Gastrocnemius medialis (tissue), 4 donors: ENCODE measurements at regions of chr5 and their contacts with region 1.

Region 1: DNA sequence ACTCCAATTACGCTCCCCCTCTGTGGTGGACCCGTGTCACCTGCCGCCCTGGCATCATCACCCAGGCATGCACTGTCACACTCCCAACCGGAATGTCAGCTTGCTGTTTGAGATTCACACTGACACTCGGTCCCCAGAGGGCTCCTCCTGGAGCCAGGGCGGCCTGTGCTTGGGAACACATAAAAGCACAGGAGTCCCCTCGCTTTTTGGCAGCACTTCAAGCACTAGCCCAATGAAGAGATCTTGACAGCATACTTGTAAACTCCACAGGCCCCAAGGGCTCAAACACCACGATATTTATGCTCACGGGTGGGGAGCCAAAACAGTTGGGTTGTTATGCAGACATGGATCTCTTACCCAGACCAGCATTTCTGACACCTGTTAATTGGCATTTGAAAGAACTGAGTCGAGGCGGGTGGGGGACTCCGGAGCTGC is 90.8 kb upstream of the EGFLAM start:
- DNase-seq: peak; percentile 90 to 91
- ATAC-seq: peak; percentile 50 to 63
- H3K4me3 ChIP-seq: peak overlapping the region; percentile 28 to 39 (median 37)
- H3K27ac ChIP-seq: peak overlapping the region; percentile 84 to 89 (median 87)
- H3K4me1 ChIP-seq: peaks cover 45 to 46% of the 10 kb centered on the region in 2 donors
- H3K27me3 ChIP-seq: no peaks in the 10 kb centered on the region
- CTCF ChIP-seq: no peak
- POLR2A ChIP-seq: peak; percentile 9 to 64

Region 2: DNA sequence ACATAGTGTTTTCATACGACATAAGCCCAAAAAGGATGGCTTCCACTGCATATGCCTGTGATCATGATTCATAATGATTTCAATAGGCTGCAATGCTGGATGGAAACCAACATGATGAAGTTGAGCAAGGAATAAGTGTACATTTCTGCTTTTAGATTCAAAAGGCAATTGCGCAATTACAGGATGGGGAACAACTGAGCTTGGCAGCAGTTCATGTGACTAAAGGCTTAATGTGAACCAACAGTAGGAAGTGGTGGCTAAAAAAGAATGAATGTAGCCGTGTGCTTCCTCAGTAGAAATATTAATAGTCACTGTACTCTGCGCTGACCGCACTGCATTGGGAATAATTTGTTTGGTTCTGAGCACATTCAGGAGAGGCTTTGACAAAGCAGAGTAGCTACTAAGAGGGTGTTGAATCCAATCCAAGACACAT is 1510.0 kb before region 1 on chr5:
- in situ Hi-C with region 1: no loop called
- intact Hi-C with region 1: loop called (anchors 10 kb)
- DNase-seq: peak; percentile 84 to 85
- ATAC-seq: peak; percentile 85 to 88
- H3K4me3 ChIP-seq: peak overlapping the region in 2 of 4 donors; percentile 6 to 23
- H3K27ac ChIP-seq: peak overlapping the region; percentile 85 to 89 (median 87)
- H3K4me1 ChIP-seq: peaks cover 56 to 57% of the 10 kb centered on the region in 2 donors
- H3K27me3 ChIP-seq: no peaks in the 10 kb centered on the region
- CTCF ChIP-seq: no peak
- POLR2A ChIP-seq: peak in 1 of 2 donors; percentile 55

Region 3: DNA sequence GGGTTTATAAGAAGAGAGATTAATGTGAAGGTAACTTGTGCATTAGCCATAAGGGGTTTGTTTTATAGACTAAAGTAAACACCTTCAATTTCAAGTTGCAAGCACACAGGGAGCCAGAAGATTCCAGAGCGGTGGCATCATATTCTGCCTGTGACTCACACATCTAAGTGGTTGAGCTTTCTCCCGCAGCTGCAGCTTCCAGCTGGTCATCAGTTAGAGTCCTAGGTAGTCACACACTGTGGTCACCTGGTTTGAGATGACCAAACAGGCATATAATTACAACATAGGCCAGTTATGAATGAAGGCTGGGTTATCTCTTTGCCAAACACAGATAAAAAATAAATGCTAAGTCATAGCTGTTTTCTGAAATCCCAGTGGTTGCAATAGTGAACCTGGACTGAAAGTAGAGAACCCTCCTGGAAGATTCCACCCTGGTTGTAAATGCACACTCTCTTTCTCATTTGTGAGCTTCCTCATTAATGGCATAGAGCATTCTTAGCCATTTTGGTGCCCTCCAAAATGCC is 499.0 kb before region 1 on chr5:
- in situ Hi-C with region 1: no loop called
- intact Hi-C with region 1: loop called (anchors 5 kb)
- DNase-seq: peak; percentile 93 to 94
- ATAC-seq: peak; percentile 95
- H3K4me3 ChIP-seq: no peak overlapping the region
- H3K27ac ChIP-seq: peak overlapping the region; percentile 78 to 89 (median 84)
- H3K4me1 ChIP-seq: peaks cover 52 to 60% of the 10 kb centered on the region in 2 donors
- H3K27me3 ChIP-seq: no peaks in the 10 kb centered on the region
- CTCF ChIP-seq: no peak
- POLR2A ChIP-seq: no peak

Region 4: GRCh38 chr5:37837414-37838032 is 330.1 kb before region 1 on chr5:
- in situ Hi-C with region 1: no loop called
- intact Hi-C with region 1: loop called (anchors 1 kb)
- DNase-seq: peak; percentile 49 to 68
- ATAC-seq: peak; percentile 36 to 57
- H3K4me3 ChIP-seq: peak overlapping the region; percentile 64 to 73 (median 70)
- H3K27ac ChIP-seq: peak overlapping the region; percentile 66 to 95 (median 86)
- H3K4me1 ChIP-seq: peaks cover 22 to 49% of the 10 kb centered on the region in 2 donors
- H3K27me3 ChIP-seq: peaks cover 0 to 70% (median 7%) of the 10 kb centered on the region in 3 donors
- CTCF ChIP-seq: peak; percentile 79 to 92 (median 88)
- POLR2A ChIP-seq: no peak

Region 5: GRCh38 chr5:38032149-38032548 is 135.4 kb before region 1 on chr5:
- in situ Hi-C with region 1: no loop called
- intact Hi-C with region 1: no loop called
- DNase-seq: no peak
- ATAC-seq: no peak
- H3K4me3 ChIP-seq: no peak overlapping the region
- H3K27ac ChIP-seq: no peak overlapping the region
- H3K4me1 ChIP-seq: no peaks in the 10 kb centered on the region
- H3K27me3 ChIP-seq: no peaks in the 10 kb centered on the region
- CTCF ChIP-seq: no peak
- POLR2A ChIP-seq: no peak

Region 6: GRCh38 chr5:38193015-38193581 is 25.5 kb after region 1 on chr5:
- in situ Hi-C with region 1: no loop called
- intact Hi-C with region 1: loop called (anchors 2 kb)
- DNase-seq: peak; percentile 44 to 63
- ATAC-seq: peak; percentile 78 to 85
- H3K4me3 ChIP-seq: no peak overlapping the region
- H3K27ac ChIP-seq: no peak overlapping the region
- H3K4me1 ChIP-seq: peaks cover 6% of the 10 kb centered on the region in 2 donors
- H3K27me3 ChIP-seq: peaks cover 0 to 11% (median 0%) of the 10 kb centered on the region in 3 donors
- CTCF ChIP-seq: peak; percentile 79 to 88 (median 84)
- POLR2A ChIP-seq: no peak

Region 7: GRCh38 chr5:38237681-38238080 is 70.1 kb after region 1 on chr5:
- in situ Hi-C with region 1: no loop called
- intact Hi-C with region 1: no loop called
- DNase-seq: no peak
- ATAC-seq: peak in 1 of 2 donors; percentile 27
- H3K4me3 ChIP-seq: no peak overlapping the region
- H3K27ac ChIP-seq: no peak overlapping the region
- H3K4me1 ChIP-seq: no peaks in the 10 kb centered on the region
- H3K27me3 ChIP-seq: no peaks in the 10 kb centered on the region
- CTCF ChIP-seq: no peak
- POLR2A ChIP-seq: no peak

Region 8: DNA sequence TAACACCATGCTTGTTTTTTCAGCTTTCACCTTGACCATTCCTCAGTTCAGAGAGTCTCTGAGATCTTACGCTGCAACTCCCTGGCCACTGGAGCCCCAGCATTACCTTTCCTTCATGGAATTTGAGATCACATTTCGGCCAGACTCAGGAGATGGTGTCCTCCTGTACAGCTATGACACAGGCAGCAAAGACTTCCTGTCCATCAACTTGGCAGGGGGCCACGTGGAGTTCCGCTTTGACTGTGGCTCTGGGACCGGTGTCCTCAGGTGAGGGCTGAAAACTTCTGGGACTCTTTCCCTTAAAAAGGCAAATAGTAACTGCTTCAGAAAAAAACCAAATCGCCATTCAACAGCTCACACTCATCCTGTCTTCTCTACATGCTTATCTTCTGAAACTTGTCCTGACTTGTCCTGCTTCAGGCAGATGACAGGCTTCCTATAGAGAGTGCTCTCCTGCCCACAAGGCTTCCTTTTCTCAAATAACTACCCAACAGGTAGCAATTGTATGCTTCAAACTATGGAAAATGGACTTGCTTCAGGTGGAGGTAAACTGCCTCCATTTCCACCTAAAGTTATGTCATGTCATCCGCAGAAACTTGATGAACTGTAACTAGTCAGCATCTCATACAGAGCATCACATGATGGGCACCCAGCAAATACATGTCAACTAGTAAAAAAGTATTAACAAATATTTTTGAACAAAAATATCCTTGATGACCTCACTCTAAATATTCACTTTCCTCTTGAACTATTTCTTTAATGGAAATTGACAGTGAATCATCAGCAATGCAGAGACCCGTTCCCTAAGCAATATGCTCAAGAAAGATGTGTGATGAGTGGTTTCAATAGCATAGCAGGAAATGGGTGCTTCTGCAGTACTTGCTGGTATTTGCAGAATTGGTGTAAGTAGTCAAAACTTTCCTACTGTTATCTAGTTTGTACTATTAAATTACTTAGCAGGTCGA is 259.7 kb after region 1 on chr5:
- in situ Hi-C with region 1: no loop called
- intact Hi-C with region 1: no loop called
- DNase-seq: no peak
- ATAC-seq: no peak
- H3K4me3 ChIP-seq: no peak overlapping the region
- H3K27ac ChIP-seq: no peak overlapping the region
- H3K4me1 ChIP-seq: no peaks in the 10 kb centered on the region
- H3K27me3 ChIP-seq: no peaks in the 10 kb centered on the region
- CTCF ChIP-seq: no peak
- POLR2A ChIP-seq: no peak

Region 9: GRCh38 chr5:38528162-38528703 is 360.7 kb after region 1 on chr5:
- in situ Hi-C with region 1: no loop called
- intact Hi-C with region 1: no loop called
- DNase-seq: no peak
- ATAC-seq: no peak
- H3K4me3 ChIP-seq: no peak overlapping the region
- H3K27ac ChIP-seq: no peak overlapping the region
- H3K4me1 ChIP-seq: peaks cover 21 to 37% of the 10 kb centered on the region in 2 donors
- H3K27me3 ChIP-seq: no peaks in the 10 kb centered on the region
- CTCF ChIP-seq: no peak
- POLR2A ChIP-seq: no peak

Region 10: DNA sequence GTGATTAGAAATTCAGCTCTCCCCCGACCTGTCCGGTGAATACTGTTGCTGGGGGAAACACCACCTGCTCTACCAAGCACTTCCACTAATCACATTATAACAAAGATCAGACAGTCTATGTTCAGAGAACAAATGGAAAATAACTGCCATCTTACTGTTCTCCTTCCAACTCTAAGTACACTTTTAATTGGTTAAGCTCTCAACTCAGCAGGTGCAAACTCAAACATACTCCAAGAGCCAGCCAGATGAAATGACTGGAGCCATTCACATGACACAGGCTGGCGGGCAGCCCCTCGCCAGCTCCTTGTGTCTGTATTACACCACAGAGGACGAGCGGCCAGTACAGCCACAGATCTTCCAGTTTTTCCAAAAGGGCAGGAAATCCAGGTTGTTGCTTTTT is 372.7 kb after region 1 on chr5:
- in situ Hi-C with region 1: no loop called
- intact Hi-C with region 1: loop called (anchors 10 kb)
- DNase-seq: peak; percentile 81 to 90
- ATAC-seq: peak; percentile 87 to 94
- H3K4me3 ChIP-seq: peak overlapping the region; percentile 5 to 19 (median 11)
- H3K27ac ChIP-seq: peak overlapping the region; percentile 79 to 87 (median 85)
- H3K4me1 ChIP-seq: peaks cover 91 to 94% of the 10 kb centered on the region in 2 donors
- H3K27me3 ChIP-seq: no peaks in the 10 kb centered on the region
- CTCF ChIP-seq: no peak
- POLR2A ChIP-seq: peak; percentile 24 to 45